ENCODE measurements at regions of chr17 and their contacts with region 1.

Region 1: DNA sequence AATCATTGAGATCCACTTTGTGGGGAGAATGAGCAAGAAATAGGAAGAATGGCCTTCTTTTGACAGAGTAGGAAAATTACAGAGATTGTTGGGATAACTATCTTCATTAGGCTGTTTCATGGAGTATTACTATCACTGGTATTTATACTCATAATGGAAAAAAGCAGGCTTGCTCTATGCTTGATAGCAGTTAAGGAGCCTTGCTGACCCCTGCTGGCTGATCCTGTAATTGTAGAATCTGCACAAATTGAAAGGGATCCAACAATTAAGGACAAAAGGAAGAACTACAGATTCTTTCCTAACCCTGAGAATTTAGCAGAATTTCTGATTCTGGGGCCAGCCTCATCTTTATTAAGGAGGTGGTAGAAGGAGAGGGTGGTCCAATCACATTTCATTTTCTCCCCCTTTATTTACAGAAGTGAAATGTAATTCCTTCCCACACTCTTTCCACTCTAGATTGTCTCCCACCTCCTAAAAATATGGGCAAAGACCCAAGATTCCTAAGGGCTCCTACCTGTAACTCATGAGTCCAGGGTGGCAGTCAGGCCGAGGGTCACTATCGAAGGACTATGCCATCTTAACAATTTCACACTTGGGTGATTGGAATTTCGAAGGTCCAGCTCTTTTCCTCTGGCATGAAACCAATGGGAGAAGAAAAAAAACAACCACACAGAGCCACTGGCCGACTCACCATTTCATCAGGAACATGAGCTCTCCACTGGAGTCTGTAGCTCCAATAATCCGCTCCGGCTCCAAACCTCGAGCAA is 26.3 kb downstream of the NFE2L1 start:
- DNase-seq: peak; percentile 56 to 82 (median 78)
- ATAC-seq: peak; percentile 87
- H3K4me3 ChIP-seq: no peak overlapping the region
- H3K4me3 Mint-ChIP-seq: no peak overlapping the region
- H3K27ac ChIP-seq: no peak overlapping the region
- H3K27ac Mint-ChIP-seq: no peak overlapping the region
- H3K4me1 ChIP-seq: no peaks in the 10 kb centered on the region
- H3K4me1 Mint-ChIP-seq: no peaks in the 10 kb centered on the region
- H3K27me3 ChIP-seq: no peaks in the 10 kb centered on the region
- H3K27me3 Mint-ChIP-seq: no peaks in the 10 kb centered on the region
- CTCF ChIP-seq: peak; percentile 76

Region 2: DNA sequence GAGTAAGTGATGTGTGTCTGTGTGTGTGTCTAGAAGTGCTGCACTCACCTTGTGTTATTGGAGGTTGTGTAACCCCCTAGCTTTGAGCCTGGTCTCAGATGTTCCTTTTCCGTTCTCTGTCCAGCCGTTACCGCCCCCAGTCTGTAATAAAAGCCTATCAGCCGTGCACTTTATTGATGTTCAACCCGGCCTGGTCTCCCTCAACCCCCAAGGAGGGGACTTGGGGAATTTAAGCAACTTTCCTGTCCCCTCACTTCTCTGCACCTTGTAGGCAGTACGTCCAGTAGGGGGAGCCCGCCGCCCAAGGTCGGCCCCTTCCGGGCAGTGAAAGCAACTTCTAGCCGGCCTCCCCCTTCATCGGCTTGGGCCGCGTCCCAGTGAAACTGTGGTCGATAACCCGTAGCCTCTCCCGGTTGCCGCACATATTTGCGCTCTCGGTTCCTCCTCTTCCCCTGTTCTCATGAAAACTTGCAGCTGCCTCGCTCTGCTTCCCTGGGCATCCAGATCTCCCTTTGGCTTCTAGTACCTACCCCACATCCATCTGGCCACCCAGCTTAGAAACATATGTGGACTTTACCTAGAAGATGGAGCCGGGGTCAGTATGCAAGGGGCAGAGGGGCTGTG is 125.2 kb before region 1 on chr17:
- CTCF ChIA-PET with region 1: interaction called, 3 read pairs
- POLR2A ChIA-PET with region 1: no interaction called
- intact Hi-C with region 1: loop called in 1 of 2 experiments (anchors 1 kb)
- DNase-seq: peak; percentile 47 to 88 (median 79)
- ATAC-seq: peak; percentile 53
- H3K4me3 ChIP-seq: peak overlapping the region; percentile 26 to 36
- H3K4me3 Mint-ChIP-seq: peak overlapping the region; percentile 82
- H3K27ac ChIP-seq: peak overlapping the region in 1 of 2 experiments; percentile 28
- H3K27ac Mint-ChIP-seq: peak overlapping the region; percentile 81
- H3K4me1 ChIP-seq: peaks cover 51% of the 10 kb centered on the region
- H3K4me1 Mint-ChIP-seq: peaks cover 46% of the 10 kb centered on the region
- H3K27me3 ChIP-seq: no peaks in the 10 kb centered on the region
- H3K27me3 Mint-ChIP-seq: no peaks in the 10 kb centered on the region
- CTCF ChIP-seq: peak; percentile 78

Region 3: GRCh38 chr17:47978324-47978723 is 96.2 kb before region 1 on chr17:
- CTCF ChIA-PET with region 1: interaction called, 5 read pairs
- POLR2A ChIA-PET with region 1: no interaction called
- intact Hi-C with region 1: loop called in 1 of 2 experiments (anchors 2 kb)
- DNase-seq: peak; percentile 8 to 65 (median 49)
- ATAC-seq: peak; percentile 68
- H3K4me3 ChIP-seq: no peak overlapping the region
- H3K4me3 Mint-ChIP-seq: no peak overlapping the region
- H3K27ac ChIP-seq: no peak overlapping the region
- H3K27ac Mint-ChIP-seq: no peak overlapping the region
- H3K4me1 ChIP-seq: no peaks in the 10 kb centered on the region
- H3K4me1 Mint-ChIP-seq: peaks cover 6% of the 10 kb centered on the region
- H3K27me3 ChIP-seq: no peaks in the 10 kb centered on the region
- H3K27me3 Mint-ChIP-seq: no peaks in the 10 kb centered on the region
- CTCF ChIP-seq: peak; percentile 58

Region 4: GRCh38 chr17:48037036-48037837 is 37.3 kb before region 1 on chr17 and contains the start of gene COPZ2:
- CTCF ChIA-PET with region 1: interaction called, 40 read pairs
- POLR2A ChIA-PET with region 1: no interaction called
- intact Hi-C with region 1: loop called (anchors 1 kb)
- DNase-seq: peak in 8 of 9 experiments; percentile 51 to 83 (median 72)
- ATAC-seq: peak; percentile 98
- H3K4me3 ChIP-seq: peak within 1 kb of the TSS; percentile 70 to 73
- H3K4me3 Mint-ChIP-seq: peak within 1 kb of the TSS; percentile 87
- H3K27ac ChIP-seq: no peak within 1 kb of the TSS
- H3K27ac Mint-ChIP-seq: no peak within 1 kb of the TSS
- H3K4me1 ChIP-seq: no peaks in the 10 kb centered on the region
- H3K4me1 Mint-ChIP-seq: peaks cover 6% of the 10 kb centered on the region
- H3K27me3 ChIP-seq: peaks cover 0 to 15% of the 10 kb centered on the region in 2 experiments
- H3K27me3 Mint-ChIP-seq: peaks cover 29% of the 10 kb centered on the region
- CTCF ChIP-seq: peak; percentile 83
- total RNA-seq, gene COPZ2: 0.57 to 0.92 TPM

Region 5: GRCh38 chr17:48054238-48055185 is 20.0 kb before region 1 on chr17:
- CTCF ChIA-PET with region 1: interaction called, 15 read pairs
- POLR2A ChIA-PET with region 1: interaction called, 3 read pairs
- intact Hi-C with region 1: no loop called
- DNase-seq: no peak
- ATAC-seq: no peak
- H3K4me3 ChIP-seq: no peak overlapping the region
- H3K4me3 Mint-ChIP-seq: no peak overlapping the region
- H3K27ac ChIP-seq: no peak overlapping the region
- H3K27ac Mint-ChIP-seq: no peak overlapping the region
- H3K4me1 ChIP-seq: peaks cover 29% of the 10 kb centered on the region
- H3K4me1 Mint-ChIP-seq: peaks cover 48% of the 10 kb centered on the region
- H3K27me3 ChIP-seq: no peaks in the 10 kb centered on the region
- H3K27me3 Mint-ChIP-seq: no peaks in the 10 kb centered on the region
- CTCF ChIP-seq: no peak

Region 6: GRCh38 chr17:48084932-48085444 is 10.5 kb after region 1 on chr17:
- CTCF ChIA-PET with region 1: interaction called, 37 read pairs
- POLR2A ChIA-PET with region 1: no interaction called
- intact Hi-C with region 1: no loop called
- DNase-seq: no peak
- ATAC-seq: no peak
- H3K4me3 ChIP-seq: no peak overlapping the region
- H3K4me3 Mint-ChIP-seq: no peak overlapping the region
- H3K27ac ChIP-seq: no peak overlapping the region
- H3K27ac Mint-ChIP-seq: no peak overlapping the region
- H3K4me1 ChIP-seq: no peaks in the 10 kb centered on the region
- H3K4me1 Mint-ChIP-seq: peaks cover 10% of the 10 kb centered on the region
- H3K27me3 ChIP-seq: no peaks in the 10 kb centered on the region
- H3K27me3 Mint-ChIP-seq: no peaks in the 10 kb centered on the region
- CTCF ChIP-seq: no peak

Region 7: GRCh38 chr17:48131216-48131824 is 56.8 kb after region 1 on chr17:
- CTCF ChIA-PET with region 1: interaction called, 94 read pairs
- POLR2A ChIA-PET with region 1: interaction called, 3 read pairs
- intact Hi-C with region 1: no loop called
- DNase-seq: peak in 8 of 9 experiments; percentile 29 to 78 (median 55)
- ATAC-seq: peak; percentile 83
- H3K4me3 ChIP-seq: no peak overlapping the region
- H3K4me3 Mint-ChIP-seq: no peak overlapping the region
- H3K27ac ChIP-seq: no peak overlapping the region
- H3K27ac Mint-ChIP-seq: no peak overlapping the region
- H3K4me1 ChIP-seq: no peaks in the 10 kb centered on the region
- H3K4me1 Mint-ChIP-seq: no peaks in the 10 kb centered on the region
- H3K27me3 ChIP-seq: no peaks in the 10 kb centered on the region
- H3K27me3 Mint-ChIP-seq: no peaks in the 10 kb centered on the region
- CTCF ChIP-seq: peak; percentile 83